Vagina (tissue), 2 donors: ENCODE measurements at regions of chr18 and their contacts with region 1.

Region 1: GRCh38 chr18:79378542-79379250 is 17.0 kb upstream of the NFATC1 start:
- DNase-seq: no peak
- H3K4me3 ChIP-seq: no peak overlapping the region
- H3K27ac ChIP-seq: no peak overlapping the region
- H3K4me1 ChIP-seq: peaks cover 8% of the 10 kb centered on the region
- H3K27me3 ChIP-seq: no peaks in the 10 kb centered on the region
- CTCF ChIP-seq: peak; percentile 95 to 97 (median 97)
- POLR2A ChIP-seq: no peak

Region 2: DNA sequence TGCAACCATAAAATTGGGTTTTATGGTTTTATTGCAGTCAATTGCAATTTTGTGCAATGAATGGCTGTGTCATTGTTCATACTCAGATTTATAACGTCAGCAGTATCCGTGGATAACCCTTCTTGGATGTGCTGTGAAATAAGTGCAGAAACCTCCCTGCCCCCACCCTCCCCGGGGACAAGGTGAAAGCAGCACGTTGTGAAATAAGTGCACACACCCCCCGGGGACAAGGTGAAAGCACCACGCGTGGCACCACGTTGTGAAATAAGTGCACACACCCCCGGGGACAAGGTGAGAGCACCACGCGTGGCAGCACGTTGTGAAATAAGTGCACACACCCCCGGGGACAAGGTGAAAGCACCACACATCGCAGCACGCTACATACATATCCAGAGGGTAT is 76.6 kb before region 1 on chr18:
- intact Hi-C with region 1: no loop called
- DNase-seq: no peak
- H3K4me3 ChIP-seq: no peak overlapping the region
- H3K27ac ChIP-seq: no peak overlapping the region
- H3K4me1 ChIP-seq: no peaks in the 10 kb centered on the region
- H3K27me3 ChIP-seq: no peaks in the 10 kb centered on the region
- CTCF ChIP-seq: no peak
- POLR2A ChIP-seq: no peak

Region 3: DNA sequence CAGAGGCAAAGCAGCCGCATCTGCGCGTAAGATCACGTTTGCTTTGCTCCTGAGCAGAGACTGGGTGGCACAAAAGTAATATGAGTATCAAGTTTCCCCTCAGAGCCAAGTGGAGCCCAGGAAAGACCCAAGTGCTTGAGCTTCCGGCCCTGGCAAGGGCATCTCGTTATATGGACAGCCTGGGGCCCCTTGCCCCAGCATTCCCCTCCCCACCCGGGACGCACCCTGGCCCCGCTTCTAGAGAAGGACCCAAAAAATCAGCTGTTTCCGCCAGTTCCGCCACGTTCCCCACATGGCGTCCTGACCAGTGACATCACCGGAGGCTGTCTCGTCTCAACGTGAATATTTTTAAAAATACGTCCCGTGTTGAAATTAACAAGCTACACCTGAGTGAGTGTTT is 152.1 kb after region 1 on chr18:
- intact Hi-C with region 1: loop called (anchors 2 kb)
- DNase-seq: no peak
- H3K4me3 ChIP-seq: no peak overlapping the region
- H3K27ac ChIP-seq: no peak overlapping the region
- H3K4me1 ChIP-seq: peaks cover 7% of the 10 kb centered on the region
- H3K27me3 ChIP-seq: no peaks in the 10 kb centered on the region
- CTCF ChIP-seq: no peak
- POLR2A ChIP-seq: no peak

Region 4: GRCh38 chr18:79644006-79644665 is 265.4 kb after region 1 on chr18:
- intact Hi-C with region 1: loop called (anchors 2 kb)
- DNase-seq: no peak
- H3K4me3 ChIP-seq: no peak overlapping the region
- H3K27ac ChIP-seq: no peak overlapping the region
- H3K4me1 ChIP-seq: peaks cover 2% of the 10 kb centered on the region
- H3K27me3 ChIP-seq: no peaks in the 10 kb centered on the region
- CTCF ChIP-seq: peak; percentile 79 to 97 (median 94)
- POLR2A ChIP-seq: no peak